CD8-positive, alpha-beta T cell (primary cell): ENCODE measurements at regions of chr16 and their contacts with region 1.

Region 1: GRCh38 chr16:77211880-77212740 is 12.9 kb downstream of the SYCE1L start:
- DNase-seq: peak; percentile 40 to 87 (median 76)
- ATAC-seq: peak; percentile 85
- H3K4me3 ChIP-seq: peak overlapping the region; percentile 74 to 76
- H3K4me3 Mint-ChIP-seq: peak overlapping the region; percentile 90
- H3K27ac ChIP-seq: peak overlapping the region; percentile 61 to 66
- H3K27ac Mint-ChIP-seq: peak overlapping the region; percentile 52
- H3K4me1 ChIP-seq: peaks cover 10% of the 10 kb centered on the region
- H3K4me1 Mint-ChIP-seq: peaks cover 11% of the 10 kb centered on the region
- H3K27me3 ChIP-seq: no peaks in the 10 kb centered on the region
- H3K27me3 Mint-ChIP-seq: no peaks in the 10 kb centered on the region
- CTCF ChIP-seq: no peak

Region 2: DNA sequence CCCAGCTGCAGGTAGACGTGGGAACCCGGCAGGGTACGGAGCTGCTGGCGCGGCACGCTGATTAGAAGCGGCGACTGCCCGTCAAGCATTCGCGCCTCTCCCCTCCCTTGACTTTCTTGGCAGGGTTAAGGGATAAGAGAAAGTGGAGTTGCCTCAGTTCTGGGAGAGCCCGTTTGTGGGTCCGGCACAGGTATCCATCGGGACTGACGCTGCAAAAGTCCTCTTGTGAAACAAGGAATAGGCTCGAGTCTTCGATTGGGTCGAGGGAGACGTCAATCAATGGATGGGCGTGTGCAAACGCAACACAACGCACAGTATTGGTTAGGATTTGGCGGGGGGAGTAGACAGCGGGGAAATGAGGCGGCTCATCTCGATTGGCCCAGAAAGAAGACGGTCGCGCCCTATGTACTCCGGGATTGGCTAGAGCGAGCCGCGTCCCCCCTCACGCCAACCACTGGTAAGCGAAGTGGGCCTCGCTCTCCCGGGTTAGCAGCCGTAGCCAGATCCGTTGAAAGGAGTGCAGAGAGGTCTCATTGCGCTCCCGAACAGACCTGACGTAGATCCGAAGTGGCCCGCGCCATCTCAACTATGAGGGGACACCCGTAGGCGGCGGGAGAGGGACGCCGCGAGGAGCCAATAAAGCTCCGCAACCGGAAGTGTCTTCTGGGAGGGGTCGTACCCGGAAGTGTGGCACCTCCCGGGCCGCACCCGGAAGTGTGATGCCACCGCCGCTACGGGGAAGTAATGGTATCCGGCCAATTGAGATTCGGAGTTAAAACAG is 21.4 kb before region 1 on chr16 and contains the start of gene MON1B:
- CTCF ChIA-PET with region 1: interaction called, 4 read pairs
- POLR2A ChIA-PET with region 1: interaction called, 8 read pairs
- intact Hi-C with region 1: loop called (anchors 1 kb)
- DNase-seq: peak; percentile 88 to 99 (median 95)
- ATAC-seq: peak; percentile 93
- H3K4me3 ChIP-seq: peak within 1 kb of the TSS; percentile 70 to 81
- H3K4me3 Mint-ChIP-seq: peak within 1 kb of the TSS; percentile 100
- H3K27ac ChIP-seq: peak within 1 kb of the TSS; percentile 98
- H3K27ac Mint-ChIP-seq: peak within 1 kb of the TSS; percentile 100
- H3K4me1 ChIP-seq: peaks cover 26% of the 10 kb centered on the region
- H3K4me1 Mint-ChIP-seq: peaks cover 52% of the 10 kb centered on the region
- H3K27me3 ChIP-seq: no peaks in the 10 kb centered on the region
- H3K27me3 Mint-ChIP-seq: peaks cover 6% of the 10 kb centered on the region
- CTCF ChIP-seq: no peak
- total RNA-seq, gene MON1B: 49.1 to 50.7 TPM

Region 3: DNA sequence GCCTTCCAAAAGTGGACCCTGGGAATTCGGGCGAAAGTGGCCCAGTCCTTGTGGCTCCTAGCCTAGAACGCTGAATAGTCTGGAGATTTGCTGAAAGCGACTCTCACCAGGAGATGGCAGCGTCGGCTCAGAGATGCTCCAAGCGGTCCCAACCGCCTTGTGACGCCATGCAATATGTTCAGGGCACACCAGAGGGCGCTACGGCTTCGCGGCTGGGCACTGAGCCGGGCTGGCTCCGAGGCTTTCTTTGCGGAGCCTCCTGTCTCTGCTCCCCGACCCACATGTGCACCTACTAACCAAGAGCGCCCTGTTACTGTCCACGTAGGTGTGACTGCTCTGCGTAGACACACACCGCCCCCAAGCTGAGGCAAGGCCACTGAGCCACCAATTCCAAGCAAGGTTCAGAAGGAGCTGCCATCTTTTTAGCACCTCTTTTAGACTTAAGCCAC is 24.0 kb after region 1 on chr16:
- CTCF ChIA-PET with region 1: interaction called, 4 read pairs
- POLR2A ChIA-PET with region 1: no interaction called
- intact Hi-C with region 1: loop called in 1 of 2 experiments (anchors 1 kb)
- DNase-seq: peak; percentile 79 to 93 (median 88)
- ATAC-seq: peak; percentile 99
- H3K4me3 ChIP-seq: peak overlapping the region; percentile 28 to 33
- H3K4me3 Mint-ChIP-seq: peak overlapping the region; percentile 57
- H3K27ac ChIP-seq: no peak overlapping the region
- H3K27ac Mint-ChIP-seq: no peak overlapping the region
- H3K4me1 ChIP-seq: peaks cover 4% of the 10 kb centered on the region
- H3K4me1 Mint-ChIP-seq: peaks cover 7% of the 10 kb centered on the region
- H3K27me3 ChIP-seq: no peaks in the 10 kb centered on the region
- H3K27me3 Mint-ChIP-seq: peaks cover 27% of the 10 kb centered on the region
- CTCF ChIP-seq: peak; percentile 99

Region 4: GRCh38 chr16:77722309-77723107 is 510.4 kb after region 1 on chr16 and contains the start of gene NUDT7:
- CTCF ChIA-PET with region 1: no interaction called
- POLR2A ChIA-PET with region 1: no interaction called
- intact Hi-C with region 1: loop called (anchors 1 to 10 kb)
- DNase-seq: peak; percentile 83 to 98 (median 96)
- ATAC-seq: peak; percentile 96
- H3K4me3 ChIP-seq: peak within 1 kb of the TSS; percentile 83 to 93
- H3K4me3 Mint-ChIP-seq: peak within 1 kb of the TSS; percentile 87
- H3K27ac ChIP-seq: peak within 1 kb of the TSS; percentile 45 to 57
- H3K27ac Mint-ChIP-seq: peak within 1 kb of the TSS; percentile 81
- H3K4me1 ChIP-seq: peaks cover 6% of the 10 kb centered on the region
- H3K4me1 Mint-ChIP-seq: peaks cover 13% of the 10 kb centered on the region
- H3K27me3 ChIP-seq: no peaks in the 10 kb centered on the region
- H3K27me3 Mint-ChIP-seq: peaks cover 2% of the 10 kb centered on the region
- CTCF ChIP-seq: no peak
- total RNA-seq, gene NUDT7: 0.42 to 1.0 TPM

Region 5: GRCh38 chr16:78099372-78100161 is 887.5 kb after region 1 on chr16 and contains the start of gene WWOX:
- CTCF ChIA-PET with region 1: no interaction called
- POLR2A ChIA-PET with region 1: no interaction called
- intact Hi-C with region 1: loop called in 1 of 2 experiments (anchors 1 kb)
- DNase-seq: peak; percentile 90 to 99 (median 95)
- ATAC-seq: peak; percentile 95
- H3K4me3 ChIP-seq: peak within 1 kb of the TSS; percentile 95
- H3K4me3 Mint-ChIP-seq: peak within 1 kb of the TSS; percentile 92
- H3K27ac ChIP-seq: peak within 1 kb of the TSS; percentile 81 to 94
- H3K27ac Mint-ChIP-seq: peak within 1 kb of the TSS; percentile 92
- H3K4me1 ChIP-seq: peaks cover 17% of the 10 kb centered on the region
- H3K4me1 Mint-ChIP-seq: peaks cover 33% of the 10 kb centered on the region
- H3K27me3 ChIP-seq: no peaks in the 10 kb centered on the region
- H3K27me3 Mint-ChIP-seq: no peaks in the 10 kb centered on the region
- CTCF ChIP-seq: peak; percentile 92
- total RNA-seq, gene WWOX: 19.8 to 24.1 TPM